ENCODE measurements at regions of chr2 and their contacts with region 1.

Region 1: GRCh38 chr2:219245148-219245898 is at the starts of genes GLB1L and STK16:
- H3K4me3 Mint-ChIP-seq: peak within 1 kb of the TSS; percentile 85
- H3K27ac Mint-ChIP-seq: peak within 1 kb of the TSS; percentile 90
- H3K4me1 Mint-ChIP-seq: peaks cover 65% of the 10 kb centered on the region
- H3K27me3 Mint-ChIP-seq: no peaks in the 10 kb centered on the region

Region 2: GRCh38 chr2:219206442-219207253 is 38.7 kb before region 1 on chr2 and contains the start of gene ZFAND2B:
- intact Hi-C with region 1: loop called (anchors 1 kb)
- H3K4me3 Mint-ChIP-seq: peak within 1 kb of the TSS; percentile 71
- H3K27ac Mint-ChIP-seq: peak within 1 kb of the TSS; percentile 83
- H3K4me1 Mint-ChIP-seq: peaks cover 33% of the 10 kb centered on the region
- H3K27me3 Mint-ChIP-seq: peaks cover 4% of the 10 kb centered on the region

Region 3: DNA sequence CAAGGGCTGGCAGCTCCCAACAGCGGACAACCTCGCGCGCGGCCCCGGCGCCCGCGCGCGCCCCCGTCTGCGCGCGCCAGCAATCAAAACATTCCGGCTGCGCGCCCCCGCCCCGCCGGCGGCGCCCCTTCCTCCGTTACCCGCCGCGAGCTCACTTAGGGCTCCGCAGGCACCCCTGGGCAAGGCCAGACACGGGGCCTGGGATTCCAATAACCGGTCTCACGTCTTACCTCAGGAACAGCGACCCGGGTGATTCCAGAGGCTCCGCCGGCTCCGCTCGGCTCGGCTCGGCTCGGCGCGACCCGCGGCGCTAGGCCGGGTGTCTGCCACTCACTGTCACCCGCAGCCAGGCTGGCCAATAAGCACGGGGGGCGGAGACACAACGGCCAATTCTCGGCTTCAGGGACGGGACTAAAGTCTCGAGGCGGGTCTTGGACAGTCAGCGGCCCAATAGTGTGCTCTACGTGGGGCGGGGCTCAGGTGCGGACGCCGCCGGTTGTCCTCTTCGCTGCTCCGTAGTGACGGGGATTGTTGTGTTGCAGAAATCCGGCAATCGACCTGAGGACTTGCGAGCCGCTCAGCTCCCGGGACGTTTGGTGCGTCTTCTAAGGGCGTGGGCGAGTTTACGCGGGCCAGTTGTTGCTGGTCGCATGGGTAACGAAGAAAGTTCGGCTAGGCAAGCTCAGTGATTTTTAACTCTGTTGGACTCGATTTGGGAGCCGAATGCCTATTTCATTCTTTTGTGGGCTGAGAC is 15.8 kb before region 1 on chr2 and contains the starts of genes ANKZF1 and ATG9A:
- intact Hi-C with region 1: loop called (anchors 2 kb)
- H3K4me3 Mint-ChIP-seq: peak within 1 kb of the TSS; percentile 92
- H3K27ac Mint-ChIP-seq: peak within 1 kb of the TSS; percentile 93
- H3K4me1 Mint-ChIP-seq: peaks cover 54% of the 10 kb centered on the region
- H3K27me3 Mint-ChIP-seq: peaks cover 10% of the 10 kb centered on the region

Measured in dendritic cell treated with granulocyte-macrophage colony-stimulating factor and Interleukin-4, amounts not matched to agents 40 ng/mL and 50 ng/mL, for 4 days (primary cell).